GM12878 (cell line): ENCODE measurements at regions of chr1 and their contacts with region 1.

Region 1: DNA sequence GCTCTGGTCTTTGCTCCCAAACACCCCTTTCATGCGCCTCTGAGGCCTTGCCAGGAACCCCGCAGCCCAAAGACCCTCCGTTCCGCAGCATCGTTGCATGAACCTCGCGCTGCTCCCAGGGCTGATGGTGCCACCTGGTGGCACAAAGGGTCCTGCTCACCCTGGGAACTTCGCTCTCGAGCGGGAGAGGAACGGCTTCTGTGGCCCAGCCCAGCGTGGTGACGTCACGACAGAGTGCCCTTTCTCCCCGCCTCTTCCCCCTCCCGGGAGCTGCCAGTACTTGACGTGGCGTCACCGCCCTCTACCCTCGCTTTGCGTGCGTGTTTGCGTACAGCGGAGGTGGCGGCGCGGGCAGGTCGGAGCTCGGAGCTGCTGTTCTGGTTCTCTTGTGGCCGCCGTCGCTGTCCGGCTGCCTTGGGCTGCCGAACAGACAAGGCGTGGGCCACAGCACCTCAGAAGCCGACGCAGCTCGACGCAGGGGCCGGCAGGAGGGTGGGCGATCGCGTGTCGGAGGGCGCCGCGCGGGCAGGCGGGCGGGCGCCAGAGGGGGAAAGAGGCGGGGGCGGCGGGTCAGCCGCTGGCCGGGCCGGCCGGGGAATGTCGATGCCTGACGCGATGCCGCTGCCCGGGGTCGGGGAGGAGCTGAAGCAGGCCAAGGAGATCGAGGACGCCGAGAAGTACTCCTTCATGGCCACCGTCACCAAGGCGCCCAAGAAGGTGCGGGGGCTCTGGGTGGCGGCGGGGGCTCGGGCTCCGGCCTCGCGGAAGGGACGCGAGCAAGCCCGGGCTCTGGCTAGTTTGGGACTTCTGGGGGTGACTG is at the start of gene AHCYL1:
- DNase-seq: peak; percentile 94
- ATAC-seq: peak; percentile 95
- H3K4me3 ChIP-seq: peak within 1 kb of the TSS; percentile 79
- H3K27ac ChIP-seq: peak within 1 kb of the TSS; percentile 76
- H3K4me1 ChIP-seq: peaks cover 7% of the 10 kb centered on the region
- H3K27me3 ChIP-seq: no peaks in the 10 kb centered on the region
- CTCF ChIP-seq: peak; percentile 94 to 99 (median 95); a peak in 5 of 6 replicates
- EP300 ChIP-seq: peak in 1 of 2 experiments; percentile 54; a peak in 1 of 4 replicates
- POLR2A ChIP-seq: peak; percentile 98
- RAD21 ChIP-seq: peak; percentile 98
- polyA plus RNA-seq, gene AHCYL1: 24.7 to 26.1 TPM

Region 2: GRCh38 chr1:108780937-108781574 is 1203.6 kb before region 1 on chr1:
- CTCF ChIA-PET with region 1: no interaction called
- POLR2A ChIA-PET with region 1: no interaction called
- RAD21 ChIA-PET with region 1: no interaction called
- SMC1A ChIA-PET with region 1: no interaction called
- in situ Hi-C with region 1: no loop called
- intact Hi-C with region 1: no loop called
- DNase-seq: no peak
- ATAC-seq: no peak
- H3K4me3 ChIP-seq: no peak overlapping the region
- H3K27ac ChIP-seq: no peak overlapping the region
- H3K4me1 ChIP-seq: no peaks in the 10 kb centered on the region
- H3K27me3 ChIP-seq: no peaks in the 10 kb centered on the region
- CTCF ChIP-seq: no peak
- EP300 ChIP-seq: no peak
- POLR2A ChIP-seq: no peak
- RAD21 ChIP-seq: no peak

Region 3: GRCh38 chr1:109539676-109540075 is 445.0 kb before region 1 on chr1 and contains the start of gene GPR61:
- CTCF ChIA-PET with region 1: interaction called, 49 read pairs
- POLR2A ChIA-PET with region 1: no interaction called
- RAD21 ChIA-PET with region 1: interaction called, 38 read pairs
- SMC1A ChIA-PET with region 1: interaction called, 3 read pairs
- in situ Hi-C with region 1: no loop called
- intact Hi-C with region 1: no loop called
- DNase-seq: no peak
- ATAC-seq: no peak
- H3K4me3 ChIP-seq: no peak within 1 kb of the TSS
- H3K27ac ChIP-seq: no peak within 1 kb of the TSS
- H3K4me1 ChIP-seq: no peaks in the 10 kb centered on the region
- H3K27me3 ChIP-seq: no peaks in the 10 kb centered on the region
- CTCF ChIP-seq: no peak
- EP300 ChIP-seq: no peak
- POLR2A ChIP-seq: no peak
- RAD21 ChIP-seq: no peak
- polyA plus RNA-seq, gene GPR61: 0.19 to 1.1 TPM

Region 4: GRCh38 chr1:109643385-109644230 is 341.1 kb before region 1 on chr1:
- CTCF ChIA-PET with region 1: interaction called, 147 read pairs
- POLR2A ChIA-PET with region 1: no interaction called
- RAD21 ChIA-PET with region 1: interaction called, 66 read pairs
- SMC1A ChIA-PET with region 1: interaction called, 95 read pairs
- in situ Hi-C with region 1: loop called (anchors 5 kb)
- intact Hi-C with region 1: loop called (anchors 5 kb)
- DNase-seq: no peak
- ATAC-seq: peak; percentile 98
- H3K4me3 ChIP-seq: no peak overlapping the region
- H3K27ac ChIP-seq: no peak overlapping the region
- H3K4me1 ChIP-seq: peaks cover 9% of the 10 kb centered on the region
- H3K27me3 ChIP-seq: no peaks in the 10 kb centered on the region
- CTCF ChIP-seq: peak; percentile 91 to 97 (median 92)
- EP300 ChIP-seq: no peak
- POLR2A ChIP-seq: no peak
- RAD21 ChIP-seq: peak; percentile 87

Region 5: GRCh38 chr1:109718491-109718890 is 266.2 kb before region 1 on chr1:
- CTCF ChIA-PET with region 1: interaction called, 11 read pairs
- POLR2A ChIA-PET with region 1: no interaction called
- RAD21 ChIA-PET with region 1: interaction called, 4 read pairs
- SMC1A ChIA-PET with region 1: no interaction called
- in situ Hi-C with region 1: no loop called
- intact Hi-C with region 1: no loop called
- DNase-seq: no peak
- ATAC-seq: peak; percentile 28; the same call in 2 of the 3 replicates
- H3K4me3 ChIP-seq: no peak overlapping the region
- H3K27ac ChIP-seq: no peak overlapping the region
- H3K4me1 ChIP-seq: peaks cover 11% of the 10 kb centered on the region
- H3K27me3 ChIP-seq: no peaks in the 10 kb centered on the region
- CTCF ChIP-seq: no peak
- EP300 ChIP-seq: no peak
- POLR2A ChIP-seq: no peak
- RAD21 ChIP-seq: no peak

Region 6: GRCh38 chr1:109796484-109797302 is 188.0 kb before region 1 on chr1:
- CTCF ChIA-PET with region 1: interaction called, 759 read pairs
- POLR2A ChIA-PET with region 1: no interaction called
- RAD21 ChIA-PET with region 1: interaction called, 15 read pairs
- SMC1A ChIA-PET with region 1: interaction called, 431 read pairs
- in situ Hi-C with region 1: no loop called
- intact Hi-C with region 1: no loop called
- DNase-seq: no peak
- ATAC-seq: peak; percentile 21; the same call in 1 of the 3 replicates
- H3K4me3 ChIP-seq: no peak overlapping the region
- H3K27ac ChIP-seq: no peak overlapping the region
- H3K4me1 ChIP-seq: peaks cover 4% of the 10 kb centered on the region
- H3K27me3 ChIP-seq: no peaks in the 10 kb centered on the region
- CTCF ChIP-seq: no peak
- EP300 ChIP-seq: no peak
- POLR2A ChIP-seq: no peak
- RAD21 ChIP-seq: no peak

Region 7: GRCh38 chr1:109910123-109910962 is 74.3 kb before region 1 on chr1 and contains the start of gene CSF1:
- CTCF ChIA-PET with region 1: interaction called, 30 read pairs
- POLR2A ChIA-PET with region 1: interaction called, 3 read pairs
- RAD21 ChIA-PET with region 1: interaction called, 11 read pairs
- SMC1A ChIA-PET with region 1: interaction called, 4 read pairs
- in situ Hi-C with region 1: no loop called
- intact Hi-C with region 1: loop called (anchors 5 kb)
- DNase-seq: peak; percentile 48
- ATAC-seq: peak; percentile 57
- H3K4me3 ChIP-seq: peak within 1 kb of the TSS; percentile 76
- H3K27ac ChIP-seq: peak within 1 kb of the TSS; percentile 64
- H3K4me1 ChIP-seq: peaks cover 20% of the 10 kb centered on the region
- H3K27me3 ChIP-seq: no peaks in the 10 kb centered on the region
- CTCF ChIP-seq: no peak
- EP300 ChIP-seq: no peak
- POLR2A ChIP-seq: peak; percentile 74
- RAD21 ChIP-seq: no peak
- polyA plus RNA-seq, gene CSF1: 1.2 to 2.0 TPM

Region 8: DNA sequence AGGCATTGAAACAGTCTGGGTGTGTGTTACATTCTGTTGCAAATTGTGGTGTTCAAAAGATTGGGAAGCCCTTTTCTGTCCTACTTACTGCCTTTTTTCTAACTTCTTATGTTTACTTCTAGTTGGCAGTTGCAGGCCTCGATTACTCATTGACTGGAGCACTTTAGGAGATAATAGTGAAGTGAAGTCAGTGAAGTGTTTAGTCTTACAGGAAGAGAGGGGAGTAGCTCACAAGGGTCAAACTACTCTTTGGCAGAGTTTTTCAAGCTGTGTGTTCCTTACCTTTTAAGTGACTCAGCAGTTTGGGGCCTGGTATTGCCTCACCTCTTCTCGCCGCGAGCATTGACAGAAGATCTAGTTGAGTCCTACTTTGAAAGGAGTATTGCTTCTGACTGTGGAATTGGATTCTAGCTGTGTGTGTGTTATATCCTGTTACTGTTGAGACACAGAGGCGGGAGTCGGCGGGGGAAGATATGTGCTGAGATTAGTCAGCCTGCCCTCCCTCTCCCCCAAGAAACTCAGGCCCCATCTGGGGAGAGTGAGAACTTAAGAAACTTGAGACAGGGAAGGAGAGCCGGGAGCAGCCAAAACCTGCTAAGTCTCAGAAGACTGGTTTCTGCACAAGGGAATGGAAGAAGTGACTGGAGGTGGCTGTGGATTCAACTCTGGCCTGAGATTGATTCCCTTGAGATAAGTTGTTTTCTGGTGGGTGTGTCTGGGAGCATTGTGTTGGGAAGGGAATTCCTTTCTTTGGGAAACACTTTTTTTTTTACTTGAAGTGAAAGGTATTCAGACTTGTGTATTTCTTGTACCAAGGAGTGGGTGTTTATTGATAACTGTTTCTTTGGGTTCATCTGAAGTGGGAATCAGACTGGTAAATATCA is 19.3 kb after region 1 on chr1:
- CTCF ChIA-PET with region 1: interaction called, 200 read pairs
- POLR2A ChIA-PET with region 1: interaction called, 7 read pairs
- RAD21 ChIA-PET with region 1: interaction called, 66 read pairs
- SMC1A ChIA-PET with region 1: interaction called, 113 read pairs
- in situ Hi-C with region 1: no loop called
- intact Hi-C with region 1: no loop called
- DNase-seq: peak; percentile 45
- ATAC-seq: peak; percentile 84
- H3K4me3 ChIP-seq: peak overlapping the region; percentile 16; the same call in 1 of the 2 replicates
- H3K27ac ChIP-seq: peak overlapping the region; percentile 50
- H3K4me1 ChIP-seq: peaks cover 14% of the 10 kb centered on the region
- H3K27me3 ChIP-seq: no peaks in the 10 kb centered on the region
- CTCF ChIP-seq: no peak
- EP300 ChIP-seq: no peak
- POLR2A ChIP-seq: no peak
- RAD21 ChIP-seq: no peak